Dorsolateral prefrontal cortex (tissue), 120 donors: ENCODE measurements at regions of chr15 and their contacts with region 1.

Region 1: GRCh38 chr15:67024314-67024997 is 40.9 kb upstream of the SMAD3 start:
- DNase-seq: peak in 9 of 10 donors; percentile 28 to 87 (median 64)
- H3K4me3 ChIP-seq: no peak overlapping the region
- H3K27ac ChIP-seq: peak overlapping the region in 58 of 59 donors; percentile 10 to 90 (median 70)
- H3K27me3 ChIP-seq: no peaks in the 10 kb centered on the region
- CTCF ChIP-seq: peak in 1 of 56 donors; percentile 7

Region 2: DNA sequence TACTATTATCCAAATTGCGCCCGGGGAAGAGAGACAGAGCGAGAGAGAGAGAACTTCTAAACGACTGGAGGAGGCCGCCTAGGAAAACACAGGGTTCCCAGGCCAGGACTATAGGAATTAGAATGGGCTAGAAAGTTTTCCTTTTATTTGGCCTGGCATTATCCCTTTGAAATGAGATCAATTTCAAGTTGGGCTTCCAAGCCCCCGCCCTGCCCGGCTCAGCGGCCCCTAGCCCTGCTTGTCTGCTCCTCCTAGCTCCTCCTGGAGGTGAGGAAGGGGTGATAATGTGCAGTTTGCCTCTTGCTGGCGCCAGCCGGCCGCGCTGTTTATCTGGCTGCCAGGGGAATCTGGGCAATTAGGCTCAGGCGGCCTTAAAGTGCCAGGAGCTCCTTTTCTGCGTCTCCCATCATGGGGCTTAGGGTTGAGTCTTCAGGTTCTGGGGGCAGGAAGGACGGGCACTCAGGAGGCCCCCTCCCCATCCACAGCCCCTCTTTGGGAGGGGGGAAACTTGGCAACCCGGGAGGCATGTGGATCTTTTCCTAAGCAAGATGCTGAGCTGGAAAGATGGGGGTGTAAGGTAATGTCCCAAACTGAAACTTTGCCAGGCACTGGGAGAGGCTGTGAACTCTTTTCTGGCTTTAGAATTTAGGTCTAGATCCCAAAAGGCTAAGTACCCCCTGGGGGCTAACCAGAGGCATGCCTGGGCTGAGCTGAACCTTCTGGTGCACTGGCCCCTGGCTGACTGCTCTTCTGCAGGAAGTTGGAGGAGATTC is 317.0 kb before region 1 on chr15:
- intact Hi-C with region 1: no loop called
- DNase-seq: no peak
- H3K4me3 ChIP-seq: peak overlapping the region in 23 of 59 donors; percentile 1 to 78 (median 67)
- H3K27ac ChIP-seq: peak overlapping the region in 8 of 59 donors; percentile 3 to 40 (median 26)
- H3K27me3 ChIP-seq: peaks cover 0 to 30% (median 8%) of the 10 kb centered on the region in 45 donors
- CTCF ChIP-seq: no peak

Region 3: GRCh38 chr15:67065444-67066093 is 41.1 kb after region 1 on chr15 and contains the start of gene SMAD3:
- intact Hi-C with region 1: loop called in 1 of 2 experiments (anchors 5 kb)
- DNase-seq: peak; percentile 16 to 77 (median 58)
- H3K4me3 ChIP-seq: peak within 1 kb of the TSS; percentile 54 to 85 (median 75)
- H3K27ac ChIP-seq: peak within 1 kb of the TSS in 57 of 59 donors; percentile 29 to 91 (median 79)
- H3K27me3 ChIP-seq: no peaks in the 10 kb centered on the region
- CTCF ChIP-seq: peak in 2 of 56 donors; percentile 1 to 11
- total RNA-seq, gene SMAD3: 14.8 to 63.4 (median 37.5) TPM

Region 4: DNA sequence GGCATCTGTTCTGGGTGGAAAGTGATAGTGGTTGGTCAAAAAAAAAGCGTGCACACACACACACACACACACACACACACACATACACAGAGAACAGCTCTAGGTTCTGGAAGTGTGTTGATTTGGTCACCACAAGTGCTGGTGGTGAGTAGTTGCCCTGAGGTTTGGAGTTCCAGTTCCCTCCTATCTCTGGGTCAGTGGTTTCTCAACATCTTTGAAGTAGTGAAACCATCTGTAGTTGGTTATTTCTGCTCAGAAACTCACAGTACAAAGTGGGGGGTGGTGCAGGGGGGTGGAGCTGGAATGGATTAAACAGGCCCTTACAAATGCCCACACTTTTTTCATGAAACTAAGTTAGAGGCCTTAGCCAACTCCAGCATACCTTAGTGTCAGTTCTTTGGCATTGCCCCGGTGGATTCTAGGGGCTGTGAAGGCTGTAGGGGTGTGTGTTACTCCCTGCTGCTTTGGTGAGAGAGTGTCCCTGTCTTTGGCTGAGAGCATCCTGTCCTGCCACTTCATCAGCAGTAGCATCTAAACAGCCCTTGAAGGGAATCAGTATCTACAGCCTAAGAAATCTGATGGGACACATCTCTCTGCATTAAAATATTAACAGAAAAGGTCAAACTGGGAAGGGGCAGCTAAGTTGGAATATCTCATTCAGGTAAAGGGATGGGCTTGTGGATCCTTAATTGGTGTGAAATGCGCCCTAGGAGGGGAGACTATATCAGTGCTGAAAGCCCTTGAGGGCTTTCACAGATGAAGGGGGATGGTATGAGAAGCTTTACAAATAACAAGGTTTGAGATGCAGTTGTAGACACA is 61.6 kb after region 1 on chr15:
- intact Hi-C with region 1: loop called in 1 of 2 experiments (anchors 5 kb)
- DNase-seq: no peak
- H3K4me3 ChIP-seq: no peak overlapping the region
- H3K27ac ChIP-seq: peak overlapping the region in 9 of 59 donors; percentile 3 to 58 (median 39)
- H3K27me3 ChIP-seq: no peaks in the 10 kb centered on the region
- CTCF ChIP-seq: no peak

Region 5: DNA sequence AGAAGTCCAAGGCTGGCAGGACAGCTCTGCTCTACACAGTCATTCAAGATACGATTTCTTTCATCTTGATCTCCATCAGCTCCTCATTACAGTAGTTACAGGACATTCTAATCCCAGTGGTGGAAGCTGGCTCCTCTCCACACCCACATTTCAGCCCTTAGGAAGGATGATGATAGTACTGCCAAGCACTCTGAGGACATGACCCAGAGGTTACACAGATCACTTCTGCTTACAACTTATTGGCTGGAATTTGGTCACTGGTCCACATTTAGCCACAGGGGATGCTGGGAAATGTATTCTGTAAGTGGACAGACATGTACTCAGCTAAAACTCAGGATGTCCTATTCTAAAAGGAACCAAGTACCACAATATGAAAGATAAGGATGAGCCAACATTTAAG is 307.2 kb after region 1 on chr15:
- intact Hi-C with region 1: no loop called
- DNase-seq: no peak
- H3K4me3 ChIP-seq: no peak overlapping the region
- H3K27ac ChIP-seq: no peak overlapping the region
- H3K27me3 ChIP-seq: no peaks in the 10 kb centered on the region
- CTCF ChIP-seq: no peak